ENCODE measurements at regions of chr7 and their contacts with region 1.

Region 1: GRCh38 chr7:155009570-155010157 is 6.7 kb upstream of the PAXIP1 start:
- DNase-seq: no peak
- CTCF ChIP-seq: peak; percentile 49

Region 2: GRCh38 chr7:154553711-154554265 is 455.9 kb before region 1 on chr7:
- CTCF ChIA-PET with region 1: no interaction called
- POLR2A ChIA-PET with region 1: no interaction called
- DNase-seq: no peak
- CTCF ChIP-seq: no peak

Region 3: GRCh38 chr7:155020996-155021395 is 11.3 kb after region 1 on chr7:
- CTCF ChIA-PET with region 1: interaction called, 17 read pairs
- POLR2A ChIA-PET with region 1: no interaction called
- DNase-seq: no peak
- CTCF ChIP-seq: no peak

Region 4: DNA sequence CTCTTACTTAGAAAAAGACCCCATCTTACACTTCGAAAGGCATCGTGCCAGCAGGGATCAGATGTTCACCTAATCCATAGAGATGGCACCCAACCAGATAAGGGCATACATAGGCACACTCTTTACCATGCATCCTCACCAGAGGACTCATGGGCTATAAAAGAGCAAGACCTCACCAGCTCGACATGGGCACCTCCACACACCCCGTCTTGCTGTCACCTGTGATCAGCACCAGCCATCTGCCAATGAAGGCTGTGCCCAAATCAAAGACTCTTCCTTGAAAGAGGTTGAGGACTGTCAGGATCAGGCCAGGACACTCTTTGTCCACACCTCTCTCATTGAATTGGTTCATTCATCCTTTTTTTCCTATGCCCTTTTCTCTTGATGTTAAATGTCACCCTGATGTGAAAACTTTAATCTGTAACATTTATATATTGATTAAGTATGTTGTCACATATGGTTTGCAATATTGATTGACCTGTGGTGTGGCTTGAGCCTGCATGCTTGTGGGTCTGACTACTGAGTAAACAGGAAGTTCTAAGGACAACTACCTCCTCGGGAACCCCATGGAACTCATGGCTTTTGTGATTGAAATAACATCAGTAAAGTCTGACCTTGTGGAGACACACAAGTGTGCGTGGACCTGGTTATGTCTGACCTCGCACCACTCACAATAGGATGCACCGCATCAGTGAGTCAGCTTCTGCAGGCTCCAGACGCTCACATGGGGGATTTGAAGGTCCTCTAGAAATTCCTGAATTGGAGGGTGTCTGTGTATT is 136.0 kb after region 1 on chr7:
- CTCF ChIA-PET with region 1: no interaction called
- POLR2A ChIA-PET with region 1: no interaction called
- DNase-seq: no peak
- CTCF ChIP-seq: no peak

Region 5: DNA sequence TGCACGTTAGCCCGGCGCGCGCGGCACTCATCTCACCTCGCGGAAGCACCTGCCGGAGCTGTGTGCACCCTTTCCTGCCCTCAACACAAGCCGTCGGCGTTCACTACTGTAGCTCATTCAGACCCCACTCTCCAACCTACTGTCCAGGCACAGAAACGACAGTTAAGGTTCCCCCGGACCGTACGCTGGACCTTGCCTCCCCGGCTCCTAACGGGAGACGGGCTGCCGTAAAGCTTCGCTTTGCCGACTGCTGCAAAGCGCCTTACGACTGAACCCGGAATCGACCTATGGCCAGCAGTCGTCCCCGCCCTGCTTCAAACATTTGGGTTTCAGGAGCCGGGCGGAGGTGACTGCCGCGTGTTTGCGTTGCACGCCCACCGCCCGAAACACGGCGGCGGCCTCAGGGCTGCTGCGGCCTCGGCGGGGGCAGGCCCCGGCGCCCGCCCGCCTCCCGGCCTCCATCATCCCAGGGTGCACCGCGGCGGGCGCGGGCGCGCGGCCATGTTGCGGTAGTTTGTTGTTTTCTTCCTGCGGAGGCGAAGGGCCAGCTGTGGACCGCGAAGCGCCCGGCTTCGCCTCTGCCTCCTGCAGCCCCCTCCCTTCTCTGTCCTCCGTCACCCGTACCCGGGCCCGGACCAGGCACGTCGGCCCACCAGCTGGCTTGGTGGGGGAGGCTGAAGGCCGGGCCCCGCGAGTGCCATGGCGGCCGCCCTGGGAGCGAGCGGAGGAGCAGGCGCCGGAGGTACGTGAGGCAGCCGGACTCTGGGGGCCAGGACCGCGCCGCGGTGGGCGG is 634.7 kb after region 1 on chr7 and contains the start of gene RBM33:
- CTCF ChIA-PET with region 1: no interaction called
- POLR2A ChIA-PET with region 1: no interaction called
- DNase-seq: peak; percentile 91
- CTCF ChIP-seq: no peak